ENCODE measurements at regions of chr17 and their contacts with region 1.

Region 1: GRCh38 chr17:7673239-7673638 is 14.1 kb downstream of the TP53 start:
- DNase-seq: peak; percentile 79
- ATAC-seq: no peak
- H3K4me3 Mint-ChIP-seq: no peak overlapping the region
- H3K27ac Mint-ChIP-seq: no peak overlapping the region
- H3K4me1 Mint-ChIP-seq: no peaks in the 10 kb centered on the region
- H3K27me3 Mint-ChIP-seq: no peaks in the 10 kb centered on the region
- CTCF ChIP-seq: peak; percentile 65

Region 2: GRCh38 chr17:7589204-7589868 is 83.9 kb before region 1 on chr17:
- CTCF ChIA-PET with region 1: interaction called, 12 read pairs
- POLR2A ChIA-PET with region 1: no interaction called
- intact Hi-C with region 1: no loop called
- DNase-seq: peak; percentile 79
- ATAC-seq: peak; percentile 81
- H3K4me3 Mint-ChIP-seq: no peak overlapping the region
- H3K27ac Mint-ChIP-seq: no peak overlapping the region
- H3K4me1 Mint-ChIP-seq: peaks cover 15% of the 10 kb centered on the region
- H3K27me3 Mint-ChIP-seq: no peaks in the 10 kb centered on the region
- CTCF ChIP-seq: peak; percentile 82

Region 3: GRCh38 chr17:7632492-7632894 is 40.7 kb before region 1 on chr17:
- CTCF ChIA-PET with region 1: interaction called, 17 read pairs
- POLR2A ChIA-PET with region 1: interaction called, 3 read pairs
- intact Hi-C with region 1: no loop called
- DNase-seq: peak; percentile 60
- ATAC-seq: peak; percentile 48
- H3K4me3 Mint-ChIP-seq: no peak overlapping the region
- H3K27ac Mint-ChIP-seq: no peak overlapping the region
- H3K4me1 Mint-ChIP-seq: peaks cover 3% of the 10 kb centered on the region
- H3K27me3 Mint-ChIP-seq: no peaks in the 10 kb centered on the region
- CTCF ChIP-seq: peak; percentile 56

Region 4: GRCh38 chr17:7644775-7645174 is 28.5 kb before region 1 on chr17:
- CTCF ChIA-PET with region 1: interaction called, 13 read pairs
- POLR2A ChIA-PET with region 1: interaction called, 3 read pairs
- intact Hi-C with region 1: no loop called
- DNase-seq: no peak
- ATAC-seq: no peak
- H3K4me3 Mint-ChIP-seq: no peak overlapping the region
- H3K27ac Mint-ChIP-seq: no peak overlapping the region
- H3K4me1 Mint-ChIP-seq: peaks cover 3% of the 10 kb centered on the region
- H3K27me3 Mint-ChIP-seq: peaks cover 7% of the 10 kb centered on the region
- CTCF ChIP-seq: no peak

Region 5: DNA sequence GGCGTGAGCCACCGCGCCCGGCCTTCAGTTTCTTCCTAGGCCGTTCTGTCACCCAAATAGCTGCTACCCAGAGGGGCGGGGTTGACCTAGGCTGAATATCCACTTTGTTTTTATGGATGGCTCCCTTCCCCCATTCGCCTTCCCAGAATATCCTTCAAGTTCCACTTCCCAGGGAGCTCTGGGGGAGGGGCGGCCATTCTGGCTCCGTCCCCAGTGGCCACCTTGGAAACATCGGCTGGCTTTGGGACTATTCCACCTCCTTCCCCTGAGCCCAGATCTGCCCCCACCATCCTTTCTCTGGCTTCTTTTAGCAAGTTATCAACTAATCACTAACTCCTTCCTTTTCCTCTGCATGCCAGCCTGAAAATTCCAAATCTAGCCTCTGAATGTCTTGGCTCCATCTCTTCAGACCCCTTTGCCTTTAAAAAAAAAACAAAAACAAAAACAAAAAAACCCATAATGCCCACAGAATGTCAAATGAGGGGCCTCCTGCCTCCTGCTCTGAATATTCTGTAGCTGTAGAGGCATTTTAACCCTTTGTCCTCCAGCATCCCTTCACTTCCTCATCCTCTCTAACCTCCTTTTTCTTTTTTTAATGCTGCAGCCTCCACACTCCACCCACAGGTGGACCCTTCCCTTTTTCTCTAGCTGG is 16.2 kb before region 1 on chr17:
- CTCF ChIA-PET with region 1: interaction called, 17 read pairs
- POLR2A ChIA-PET with region 1: interaction called, 8 read pairs
- intact Hi-C with region 1: no loop called
- DNase-seq: no peak
- ATAC-seq: no peak
- H3K4me3 Mint-ChIP-seq: no peak overlapping the region
- H3K27ac Mint-ChIP-seq: no peak overlapping the region
- H3K4me1 Mint-ChIP-seq: no peaks in the 10 kb centered on the region
- H3K27me3 Mint-ChIP-seq: peaks cover 13% of the 10 kb centered on the region
- CTCF ChIP-seq: no peak